ENCODE measurements at regions of chr15 and their contacts with region 1.

Region 1: DNA sequence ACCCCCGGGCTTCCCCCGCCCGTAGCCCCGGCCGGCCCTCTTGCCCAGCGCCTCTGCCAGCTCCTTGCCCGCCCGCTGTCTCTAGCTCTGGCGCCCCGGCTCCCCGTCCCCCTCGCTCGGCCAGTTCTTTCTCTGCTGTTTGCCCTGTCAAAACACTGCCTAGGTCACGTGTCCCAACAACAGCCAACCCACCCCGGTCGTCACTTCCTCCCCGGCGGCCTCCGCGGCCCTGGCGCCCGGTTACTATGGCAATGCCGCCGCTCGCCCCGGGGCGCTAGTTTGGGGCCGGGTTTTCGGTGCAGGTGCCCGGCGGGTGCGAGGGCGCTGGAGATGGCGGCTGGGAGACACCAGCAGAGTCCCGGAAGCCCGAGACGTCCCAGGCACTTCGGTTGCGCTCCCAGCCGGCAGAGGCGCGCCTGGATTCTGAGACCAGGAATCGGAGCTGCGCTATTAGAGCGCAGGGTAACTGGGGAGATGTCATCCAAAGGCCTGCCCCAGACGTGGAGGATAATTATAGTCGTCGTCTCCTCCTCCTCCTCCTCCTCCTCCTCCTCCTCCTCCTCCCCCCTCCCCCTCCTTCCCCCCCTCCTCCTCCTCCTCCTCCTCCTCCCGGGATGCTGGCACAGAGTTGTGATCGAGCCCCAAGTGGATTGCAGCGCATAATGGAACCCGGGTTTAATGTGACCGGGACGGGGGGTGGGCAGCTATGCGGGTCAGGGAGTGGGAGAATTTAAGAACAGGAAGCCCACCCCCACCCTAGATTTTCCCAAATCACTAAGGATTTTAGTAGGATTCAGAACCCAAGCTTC is at the start of gene ATOSA:
- DNase-seq: peak; percentile 91 to 96
- ATAC-seq: peak; percentile 89 to 93 (median 90)
- H3K4me3 ChIP-seq: peak within 1 kb of the TSS; percentile 93
- H3K27ac ChIP-seq: peak within 1 kb of the TSS; percentile 99
- H3K4me1 ChIP-seq: peaks cover 30% of the 10 kb centered on the region
- H3K27me3 ChIP-seq: no peaks in the 10 kb centered on the region
- CTCF ChIP-seq: no peak
- total RNA-seq, gene ATOSA: 45.5 to 71.7 (median 57.6) TPM

Region 2: GRCh38 chr15:52636459-52636858 is 43.0 kb before region 1 on chr15:
- intact Hi-C with region 1: loop called in 1 of 2 experiments (anchors 5 kb)
- DNase-seq: no peak
- ATAC-seq: no peak
- H3K4me3 ChIP-seq: no peak overlapping the region
- H3K27ac ChIP-seq: no peak overlapping the region
- H3K4me1 ChIP-seq: no peaks in the 10 kb centered on the region
- H3K27me3 ChIP-seq: no peaks in the 10 kb centered on the region
- CTCF ChIP-seq: no peak

Region 3: DNA sequence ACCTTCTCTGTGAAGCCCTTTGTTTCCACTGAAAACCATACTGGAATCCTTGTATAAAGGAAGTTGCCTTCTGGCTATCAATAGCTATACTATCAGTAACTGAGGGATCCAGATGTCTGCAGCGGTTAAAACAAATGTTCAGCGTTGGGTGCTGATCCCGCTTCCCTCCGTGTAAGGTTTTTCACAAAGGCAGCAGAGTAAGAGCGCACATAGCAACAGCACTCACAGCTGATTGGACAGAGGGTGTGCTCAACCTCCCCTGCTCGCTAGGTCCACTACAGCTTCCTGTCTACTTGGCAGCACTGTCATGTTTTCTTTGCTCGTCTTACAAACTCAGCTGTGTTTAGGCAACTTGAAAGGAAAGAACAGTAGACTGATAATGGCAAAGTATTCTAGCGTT is 27.6 kb before region 1 on chr15:
- intact Hi-C with region 1: loop called in 1 of 2 experiments (anchors 2 kb)
- DNase-seq: peak; percentile 29 to 65
- ATAC-seq: peak; percentile 82 to 88 (median 86)
- H3K4me3 ChIP-seq: peak overlapping the region; percentile 32
- H3K27ac ChIP-seq: peak overlapping the region; percentile 77
- H3K4me1 ChIP-seq: peaks cover 80% of the 10 kb centered on the region
- H3K27me3 ChIP-seq: no peaks in the 10 kb centered on the region
- CTCF ChIP-seq: no peak

Region 4: DNA sequence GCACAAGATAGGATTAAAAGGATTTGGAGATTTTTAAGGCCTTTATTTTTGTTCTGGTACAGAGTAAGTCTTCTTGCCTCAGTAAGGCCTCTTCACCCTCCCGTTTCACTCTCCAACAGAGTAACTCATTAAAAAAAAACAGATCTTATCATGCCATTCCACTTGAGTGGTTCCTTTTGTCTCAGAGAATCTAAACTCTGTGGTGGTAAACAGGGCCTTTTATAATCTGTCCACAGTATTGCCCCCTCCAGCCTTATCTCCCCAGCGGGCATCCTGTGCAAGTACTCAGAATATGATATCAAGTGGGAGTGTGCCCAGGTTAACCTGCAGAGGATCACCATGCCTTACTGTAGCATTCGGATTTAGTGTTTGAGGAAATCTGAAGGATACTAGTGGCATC is 20.0 kb after region 1 on chr15:
- intact Hi-C with region 1: no loop called
- DNase-seq: no peak
- ATAC-seq: no peak
- H3K4me3 ChIP-seq: no peak overlapping the region
- H3K27ac ChIP-seq: no peak overlapping the region
- H3K4me1 ChIP-seq: no peaks in the 10 kb centered on the region
- H3K27me3 ChIP-seq: peaks cover 0 to 5% (median 0%) of the 10 kb centered on the region in 3 donors
- CTCF ChIP-seq: no peak

Region 5: DNA sequence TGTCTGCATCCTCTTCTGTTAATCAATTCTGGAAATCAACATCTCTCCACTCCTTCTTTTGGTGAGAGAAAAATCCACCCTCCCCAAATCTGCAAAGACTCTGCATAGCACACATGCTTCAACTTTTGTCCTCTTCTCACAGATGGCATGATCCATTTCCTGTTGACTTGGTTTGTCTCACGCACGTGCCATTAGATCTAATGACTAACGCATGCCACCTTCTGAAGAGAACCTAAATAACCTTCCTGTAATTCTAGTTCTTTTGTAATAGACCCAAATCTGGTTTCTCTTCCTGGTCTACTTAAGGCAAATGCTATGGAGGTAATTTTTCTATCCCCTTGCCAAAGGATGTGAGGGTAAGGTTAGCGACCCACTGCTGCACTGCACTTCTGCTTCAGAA is 50.7 kb after region 1 on chr15:
- intact Hi-C with region 1: loop called (anchors 1 to 5 kb)
- DNase-seq: no peak
- ATAC-seq: peak in 3 of 4 donors; percentile 45 to 69 (median 55)
- H3K4me3 ChIP-seq: no peak overlapping the region
- H3K27ac ChIP-seq: peak overlapping the region; percentile 78
- H3K4me1 ChIP-seq: peaks cover 42% of the 10 kb centered on the region
- H3K27me3 ChIP-seq: no peaks in the 10 kb centered on the region
- CTCF ChIP-seq: no peak

Region 6: DNA sequence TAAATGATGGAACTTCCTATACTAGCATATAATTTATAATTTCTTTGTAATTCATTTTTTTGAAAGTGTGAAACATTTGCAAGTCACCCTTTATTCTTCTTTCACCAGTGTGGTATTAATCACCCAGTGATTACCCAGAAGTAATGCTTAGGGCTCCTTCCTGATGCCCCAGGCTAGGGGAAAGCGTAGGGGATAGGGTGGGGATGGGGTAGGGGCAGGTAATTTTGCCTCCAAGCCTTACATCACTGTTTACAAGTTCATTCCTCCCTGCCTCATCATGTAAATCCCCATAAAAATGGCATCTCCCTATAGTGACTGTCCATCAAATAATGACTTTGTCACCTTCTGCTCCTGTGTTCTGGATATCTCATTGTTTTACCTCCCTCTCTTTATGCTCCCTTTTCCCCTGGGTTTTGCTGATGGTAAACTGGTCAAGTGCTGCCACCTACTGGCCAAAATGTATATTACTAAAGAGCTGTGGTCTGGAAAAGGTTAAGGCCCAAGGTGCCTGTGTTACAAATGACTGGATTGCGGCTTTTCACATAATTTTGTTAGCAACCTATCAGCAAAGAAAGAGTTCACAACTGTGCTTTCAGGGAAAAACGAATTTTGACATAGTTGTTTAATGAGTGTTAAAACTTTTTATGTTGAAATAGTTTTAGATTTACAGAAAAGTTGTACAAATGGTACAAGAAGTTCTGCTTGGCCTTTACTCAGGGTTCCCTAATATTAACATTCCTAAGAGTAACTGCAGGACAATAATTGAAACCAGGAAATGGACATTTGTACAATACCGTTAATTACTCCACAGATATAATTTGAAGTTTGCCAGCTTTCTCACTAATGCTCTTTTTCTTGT is 56.0 kb after region 1 on chr15:
- intact Hi-C with region 1: loop called in 1 of 2 experiments (anchors 1 kb)
- DNase-seq: no peak
- ATAC-seq: peak; percentile 52 to 76 (median 62)
- H3K4me3 ChIP-seq: no peak overlapping the region
- H3K27ac ChIP-seq: no peak overlapping the region
- H3K4me1 ChIP-seq: peaks cover 35% of the 10 kb centered on the region
- H3K27me3 ChIP-seq: no peaks in the 10 kb centered on the region
- CTCF ChIP-seq: peak; percentile 91